PC-9 (cell line): ENCODE measurements at regions of chr20 and their contacts with region 1.

Region 1: DNA sequence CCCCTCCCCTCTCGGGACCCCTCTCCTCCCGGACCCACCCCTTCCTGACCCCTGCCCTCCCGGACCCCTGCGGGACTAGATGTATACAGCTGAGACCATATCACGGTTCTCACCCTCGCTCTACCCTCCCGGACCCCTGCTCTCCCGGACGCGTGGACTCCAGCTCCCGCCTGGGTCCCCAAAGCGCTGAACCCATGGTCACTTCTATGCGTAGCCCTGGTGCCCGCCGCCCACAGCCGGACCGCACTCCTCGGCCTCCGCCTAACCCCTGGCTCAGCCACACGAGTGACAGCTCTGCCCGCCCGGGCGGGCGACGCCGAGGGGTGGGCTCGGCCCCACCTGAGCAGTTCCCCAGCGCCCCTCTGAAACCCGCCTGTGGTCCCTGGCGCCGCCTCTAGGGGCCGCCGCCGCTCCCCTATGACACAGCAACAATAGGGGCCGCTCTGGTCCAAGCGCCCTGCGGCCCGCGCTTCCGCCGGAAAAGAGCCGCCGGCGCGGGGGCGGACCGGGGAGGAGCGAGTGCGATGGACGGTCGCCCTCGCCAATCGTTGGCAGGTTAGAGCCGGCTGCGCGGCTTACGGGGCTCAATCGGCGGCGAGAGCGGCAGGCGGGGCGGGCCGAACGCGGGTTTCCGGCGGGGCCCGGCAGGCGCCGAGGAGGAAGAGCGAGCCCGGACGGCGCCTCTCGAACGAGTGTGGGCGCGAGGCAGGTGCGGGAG is at the start of gene ADRM1:
- DNase-seq: peak; percentile 86 to 99
- H3K4me3 ChIP-seq: peak within 1 kb of the TSS; percentile 99
- H3K27ac ChIP-seq: peak within 1 kb of the TSS; percentile 82
- H3K4me1 ChIP-seq: peaks cover 20% of the 10 kb centered on the region
- H3K27me3 ChIP-seq: no peaks in the 10 kb centered on the region
- CTCF ChIP-seq: peak; percentile 89
- total RNA-seq, gene ADRM1: 172 and 173 TPM in 2 replicates

Region 2: DNA sequence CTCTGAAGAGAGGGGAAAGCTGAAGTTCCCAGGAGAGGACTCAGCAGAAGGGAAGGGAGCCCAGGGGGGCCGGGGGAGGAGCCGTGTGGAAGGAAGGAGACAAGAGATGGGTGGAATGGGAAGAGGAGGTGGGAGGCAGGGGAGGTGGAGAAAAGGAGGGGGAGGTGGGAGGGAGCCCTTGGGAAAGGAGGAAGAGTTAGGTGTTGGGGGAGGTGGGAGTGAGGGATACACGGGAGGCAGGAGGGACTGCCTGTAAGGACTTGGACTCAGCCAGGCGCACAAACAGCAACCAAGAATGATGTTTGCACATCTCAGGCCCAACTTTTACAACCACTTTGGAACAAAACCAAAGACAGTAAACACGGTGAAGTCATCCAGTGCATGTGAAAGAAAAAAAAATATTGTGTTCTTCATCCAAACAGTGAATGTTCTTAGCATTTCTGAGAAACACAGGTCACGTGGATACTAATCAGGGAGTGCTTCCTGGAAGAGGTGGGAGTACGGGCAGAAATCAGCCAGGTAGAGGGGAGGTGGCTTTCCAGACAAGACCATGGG is 197.6 kb before region 1 on chr20:
- CTCF ChIA-PET with region 1: interaction called, 12 read pairs
- POLR2A ChIA-PET with region 1: no interaction called
- intact Hi-C with region 1: no loop called
- DNase-seq: no peak
- H3K4me3 ChIP-seq: no peak overlapping the region
- H3K27ac ChIP-seq: no peak overlapping the region
- H3K4me1 ChIP-seq: no peaks in the 10 kb centered on the region
- H3K27me3 ChIP-seq: peaks cover 64% of the 10 kb centered on the region
- CTCF ChIP-seq: no peak

Region 3: GRCh38 chr20:62357187-62357667 is 54.7 kb after region 1 on chr20:
- CTCF ChIA-PET with region 1: no interaction called
- POLR2A ChIA-PET with region 1: interaction called, 7 read pairs
- intact Hi-C with region 1: loop called (anchors 2 kb)
- DNase-seq: peak; percentile 74 to 96
- H3K4me3 ChIP-seq: peak overlapping the region; percentile 55
- H3K27ac ChIP-seq: peak overlapping the region; percentile 86
- H3K4me1 ChIP-seq: peaks cover 92% of the 10 kb centered on the region
- H3K27me3 ChIP-seq: no peaks in the 10 kb centered on the region
- CTCF ChIP-seq: no peak

Region 4: GRCh38 chr20:62407221-62407992 is 104.9 kb after region 1 on chr20 and contains the start of gene CABLES2:
- CTCF ChIA-PET with region 1: no interaction called
- POLR2A ChIA-PET with region 1: interaction called, 16 read pairs
- intact Hi-C with region 1: loop called (anchors 1 kb)
- DNase-seq: peak; percentile 85 to 96
- H3K4me3 ChIP-seq: peak within 1 kb of the TSS; percentile 72
- H3K27ac ChIP-seq: no peak within 1 kb of the TSS
- H3K4me1 ChIP-seq: peaks cover 18% of the 10 kb centered on the region
- H3K27me3 ChIP-seq: no peaks in the 10 kb centered on the region
- CTCF ChIP-seq: peak; percentile 35; the same call in 1 of the 2 replicates
- total RNA-seq, gene CABLES2: 11.2 and 14.1 TPM in 2 replicates

Region 5: GRCh38 chr20:62652051-62652926 is 349.8 kb after region 1 on chr20:
- CTCF ChIA-PET with region 1: no interaction called
- POLR2A ChIA-PET with region 1: no interaction called
- intact Hi-C with region 1: loop called (anchors 5 kb)
- DNase-seq: peak; percentile 94
- H3K4me3 ChIP-seq: 0 out of 2 replicates have a peak overlapping the region, but pooled peaks have one; percentile 19
- H3K27ac ChIP-seq: peak overlapping the region; percentile 59
- H3K4me1 ChIP-seq: peaks cover 36% of the 10 kb centered on the region
- H3K27me3 ChIP-seq: no peaks in the 10 kb centered on the region
- CTCF ChIP-seq: no peak